ENCODE measurements at regions of chr1 and their contacts with region 1.

Region 1: DNA sequence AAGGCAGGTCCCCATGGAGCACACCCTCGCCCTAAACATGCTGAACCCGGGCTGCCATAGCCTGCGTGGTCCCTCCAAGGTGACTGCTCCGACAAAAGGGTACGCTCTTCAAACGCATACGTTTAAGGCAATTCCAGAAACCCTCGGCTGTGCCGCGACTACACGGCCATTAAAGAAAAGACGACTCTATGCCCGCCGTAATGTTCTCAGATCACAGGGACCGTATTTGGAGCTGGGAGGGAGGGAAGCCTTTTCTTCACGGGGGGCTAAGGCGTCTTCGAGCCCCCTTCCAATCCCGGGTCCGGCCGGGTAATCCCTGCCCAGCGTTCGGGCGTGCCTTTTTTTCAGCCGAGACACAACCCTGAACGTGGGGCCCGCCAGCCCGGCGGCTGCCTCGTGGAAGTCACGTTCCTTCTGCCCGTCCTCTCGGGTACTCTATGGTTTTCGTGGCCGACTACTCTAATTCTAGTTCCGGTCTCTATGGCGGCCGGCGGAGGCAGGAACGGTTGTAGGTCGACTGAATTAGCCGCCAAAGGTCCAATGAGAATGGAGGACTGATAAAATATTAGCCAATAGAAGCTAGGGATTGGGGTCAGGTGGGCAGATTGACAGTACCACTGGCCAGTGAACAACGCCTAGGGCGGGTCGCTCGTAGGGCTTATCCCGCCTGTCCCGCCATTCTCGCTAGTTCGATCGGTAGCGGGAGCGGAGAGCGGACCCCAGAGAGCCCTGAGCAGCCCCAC is at the start of gene YBX1:
- DNase-seq: peak; percentile 86 to 99 (median 96)
- H3K4me3 ChIP-seq: peak within 1 kb of the TSS; percentile 70 to 97 (median 87)
- H3K27ac ChIP-seq: peak within 1 kb of the TSS; percentile 61 to 97 (median 91)
- H3K27me3 ChIP-seq: no peaks in the 10 kb centered on the region
- CTCF ChIP-seq: peak in 15 of 56 donors; percentile 6 to 45 (median 17)
- total RNA-seq, gene YBX1: 68.9 to 189 (median 108) TPM

Region 2: DNA sequence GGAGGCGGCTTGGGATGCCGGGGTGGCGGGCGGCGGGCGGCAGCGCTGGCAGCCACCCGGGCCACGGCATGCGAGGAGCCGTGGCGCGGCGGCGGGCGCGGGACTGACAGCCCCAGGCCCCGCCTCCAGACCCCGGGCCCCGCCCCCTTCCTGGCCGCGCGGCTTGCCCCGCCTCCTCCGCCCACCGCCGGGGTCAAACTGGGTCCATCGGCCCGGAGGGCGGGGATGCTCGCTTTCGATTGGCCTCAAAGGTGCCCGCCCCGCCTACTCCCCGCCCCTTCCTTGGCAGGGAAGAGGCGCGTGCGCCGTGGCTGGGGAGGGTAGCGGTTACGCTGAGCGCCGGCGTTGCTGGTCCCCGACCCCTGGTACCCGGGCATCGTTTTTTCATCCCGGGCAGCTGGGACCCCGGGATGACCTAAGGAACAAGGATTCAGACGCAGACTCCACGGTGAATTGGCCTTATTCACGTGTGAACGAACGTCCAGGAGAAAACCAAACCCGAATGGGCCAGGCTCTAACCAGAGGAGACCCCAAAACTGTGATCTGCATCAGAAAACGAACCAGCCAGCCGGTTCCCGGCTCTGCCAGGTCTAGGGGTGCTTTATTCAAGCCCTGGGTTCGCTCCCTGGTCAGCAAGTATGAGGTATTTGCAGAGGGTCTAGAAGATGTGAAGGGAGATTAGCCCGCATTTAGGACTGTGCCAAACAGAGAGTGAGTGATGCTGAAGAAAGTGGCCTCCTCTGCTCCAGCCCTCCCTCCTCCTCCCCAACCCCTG is 645.9 kb before region 1 on chr1:
- intact Hi-C with region 1: loop called in 1 of 2 experiments (anchors 5 kb)
- DNase-seq: peak; percentile 92 to 97 (median 96)
- H3K4me3 ChIP-seq: peak overlapping the region; percentile 53 to 98 (median 90)
- H3K27ac ChIP-seq: peak overlapping the region in 45 of 59 donors; percentile 3 to 85 (median 66)
- H3K27me3 ChIP-seq: no peaks in the 10 kb centered on the region
- CTCF ChIP-seq: peak in 3 of 56 donors; percentile 2 to 11 (median 10)

Region 3: GRCh38 chr1:42173155-42173933 is 508.6 kb before region 1 on chr1:
- intact Hi-C with region 1: loop called in 1 of 2 experiments (anchors 10 kb)
- DNase-seq: peak in 9 of 10 donors; percentile 57 to 79 (median 71)
- H3K4me3 ChIP-seq: peak overlapping the region in 1 of 59 donors; percentile 0
- H3K27ac ChIP-seq: peak overlapping the region in 36 of 59 donors; percentile 0 to 64 (median 30)
- H3K27me3 ChIP-seq: no peaks in the 10 kb centered on the region
- CTCF ChIP-seq: peak; percentile 76 to 99 (median 95)

Region 4: DNA sequence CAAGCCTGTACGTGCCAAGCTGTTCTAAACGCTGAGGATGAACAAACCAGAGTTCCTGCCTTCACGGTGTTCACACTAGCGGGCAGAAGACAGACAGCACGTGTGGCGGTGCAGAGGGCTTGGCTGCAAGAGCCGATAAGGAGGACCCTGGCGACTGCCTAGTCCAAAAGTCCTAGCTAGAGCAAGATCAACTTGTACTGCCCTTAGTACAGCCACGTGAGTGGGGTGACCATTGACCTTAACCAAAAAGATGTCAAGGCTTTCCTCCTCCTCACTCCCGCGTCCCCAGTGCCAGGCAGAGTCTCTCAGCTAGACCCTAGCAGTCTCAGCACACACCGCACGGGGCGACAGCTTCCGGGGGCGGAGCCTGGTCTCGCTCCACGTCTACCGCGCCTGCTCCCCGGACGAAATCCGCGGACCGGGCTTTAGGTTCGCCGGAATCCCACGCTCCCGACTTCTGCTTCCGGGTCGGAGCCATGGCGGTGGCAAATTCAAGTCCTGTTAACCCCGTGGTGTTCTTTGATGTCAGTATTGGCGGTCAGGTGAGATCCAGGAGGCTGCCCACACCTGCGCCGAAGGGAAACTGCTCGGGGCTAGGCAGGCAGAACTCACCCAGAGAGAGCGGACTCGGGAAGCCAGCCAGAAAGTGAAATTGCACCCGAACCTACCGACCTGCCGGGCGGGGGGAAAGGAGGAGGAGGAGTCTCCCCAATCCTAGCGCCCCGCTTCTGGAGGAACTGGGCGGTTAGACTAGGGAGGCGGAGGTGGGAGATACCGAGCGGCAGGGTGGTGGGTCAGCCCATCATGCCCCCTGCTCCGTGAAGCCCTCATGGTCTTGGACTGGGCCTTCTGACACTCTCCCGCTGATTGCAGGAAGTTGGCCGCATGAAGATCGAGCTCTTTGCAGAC is 23.7 kb before region 1 on chr1 and contains the start of gene PPIH:
- intact Hi-C with region 1: loop called (anchors 1 kb)
- DNase-seq: peak; percentile 93 to 97 (median 96)
- H3K4me3 ChIP-seq: peak within 1 kb of the TSS; percentile 65 to 97 (median 87)
- H3K27ac ChIP-seq: peak within 1 kb of the TSS in 55 of 59 donors; percentile 15 to 93 (median 75)
- H3K27me3 ChIP-seq: no peaks in the 10 kb centered on the region
- CTCF ChIP-seq: peak in 54 of 56 donors; percentile 17 to 62 (median 44)
- total RNA-seq, gene PPIH: 10.4 to 36.8 (median 23.8) TPM

Region 5: GRCh38 chr1:42723501-42723900 is 41.6 kb after region 1 on chr1:
- intact Hi-C with region 1: no loop called
- DNase-seq: no peak
- H3K4me3 ChIP-seq: no peak overlapping the region
- H3K27ac ChIP-seq: no peak overlapping the region
- H3K27me3 ChIP-seq: no peaks in the 10 kb centered on the region
- CTCF ChIP-seq: no peak

Region 6: GRCh38 chr1:42747125-42747524 is 65.2 kb after region 1 on chr1:
- intact Hi-C with region 1: loop called in 1 of 2 experiments (anchors 5 kb)
- DNase-seq: peak in 7 of 10 donors; percentile 32 to 68 (median 52)
- H3K4me3 ChIP-seq: no peak overlapping the region
- H3K27ac ChIP-seq: no peak overlapping the region
- H3K27me3 ChIP-seq: no peaks in the 10 kb centered on the region
- CTCF ChIP-seq: peak in 55 of 56 donors; percentile 20 to 76 (median 61)

Region 7: DNA sequence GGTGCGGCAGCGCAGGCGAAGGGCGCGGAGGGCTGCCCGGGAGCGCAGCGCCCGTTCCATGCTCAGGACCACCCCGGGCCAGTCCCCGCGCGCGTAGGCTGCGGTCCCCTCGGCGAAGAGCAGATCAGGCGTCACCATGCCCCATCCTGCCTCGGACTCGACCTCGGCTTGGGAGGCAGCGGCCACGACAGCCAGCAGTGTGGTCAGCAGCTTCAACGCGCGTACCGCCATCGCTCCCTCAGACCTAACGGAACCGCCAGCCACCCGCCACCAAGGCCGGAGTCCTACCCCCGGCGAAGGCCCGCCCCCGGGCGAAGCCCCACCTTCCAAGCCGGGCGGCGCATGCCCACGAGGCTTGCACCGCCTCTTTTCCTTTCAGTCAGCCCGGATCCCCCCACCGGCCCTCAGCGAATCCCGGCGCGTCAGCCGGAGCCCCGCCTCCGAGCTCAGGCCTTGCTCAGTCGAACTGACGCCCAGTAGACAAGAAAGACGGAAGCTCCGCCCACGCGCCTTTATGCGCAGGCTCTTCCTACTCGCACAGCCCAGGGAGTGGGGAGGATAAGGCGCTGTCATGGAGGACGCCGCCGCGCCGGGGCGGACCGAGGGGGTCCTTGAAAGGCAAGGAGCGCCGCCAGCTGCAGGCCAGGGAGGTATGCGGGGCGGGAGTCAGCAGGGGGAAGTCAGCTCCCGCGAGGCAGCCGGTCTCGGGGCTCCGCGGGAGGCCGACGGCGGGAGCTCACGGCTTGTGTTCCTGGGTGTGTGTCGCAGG is 85.0 kb after region 1 on chr1 and contains the starts of genes C1orf50 and P3H1:
- intact Hi-C with region 1: loop called (anchors 2 kb)
- DNase-seq: peak; percentile 99 to 100 (median 100)
- H3K4me3 ChIP-seq: peak within 1 kb of the TSS; percentile 75 to 100 (median 96)
- H3K27ac ChIP-seq: peak within 1 kb of the TSS; percentile 38 to 97 (median 88)
- H3K27me3 ChIP-seq: no peaks in the 10 kb centered on the region
- CTCF ChIP-seq: peak in 25 of 56 donors; percentile 5 to 62 (median 26)
- total RNA-seq, gene C1orf50: 5.1 to 19.5 (median 10.6) TPM
- total RNA-seq, gene P3H1: 13.8 to 34.7 (median 21.9) TPM

Measured in dorsolateral prefrontal cortex (tissue), 120 donors.